Heart left ventricle (tissue), 16 donors: ENCODE measurements at regions of chr3 and their contacts with region 1.

Region 1: GRCh38 chr3:24483873-24484272 is 10.8 kb downstream of the THRB start:
- DNase-seq: no peak
- ATAC-seq: peak in 2 of 4 donors; percentile 25 to 49
- H3K4me3 ChIP-seq: no peak overlapping the region
- H3K27ac ChIP-seq: no peak overlapping the region
- H3K4me1 ChIP-seq: peaks cover 0 to 56% (median 9%) of the 10 kb centered on the region in 12 donors
- H3K27me3 ChIP-seq: no peaks in the 10 kb centered on the region
- CTCF ChIP-seq: no peak
- POLR2A ChIP-seq: no peak

Region 2: GRCh38 chr3:24365194-24365612 is 118.7 kb before region 1 on chr3:
- intact Hi-C with region 1: loop called in 2 of 10 experiments (anchors 10 kb)
- DNase-seq: peak in 4 of 5 donors; percentile 35 to 57 (median 46)
- ATAC-seq: peak; percentile 76 to 94 (median 93)
- H3K4me3 ChIP-seq: no peak overlapping the region
- H3K27ac ChIP-seq: peak overlapping the region in 9 of 12 donors; percentile 4 to 57 (median 28)
- H3K4me1 ChIP-seq: peaks cover 0 to 38% (median 24%) of the 10 kb centered on the region in 12 donors
- H3K27me3 ChIP-seq: no peaks in the 10 kb centered on the region
- CTCF ChIP-seq: peak in 4 of 12 donors; percentile 25 to 46 (median 40)
- POLR2A ChIP-seq: no peak

Region 3: GRCh38 chr3:24377218-24377993 is 106.5 kb before region 1 on chr3:
- intact Hi-C with region 1: loop called in 1 of 10 experiments (anchors 10 kb)
- DNase-seq: no peak
- ATAC-seq: peak in 1 of 4 donors; percentile 30
- H3K4me3 ChIP-seq: no peak overlapping the region
- H3K27ac ChIP-seq: peak overlapping the region in 1 of 12 donors; percentile 52
- H3K4me1 ChIP-seq: peaks cover 0 to 47% (median 17%) of the 10 kb centered on the region in 12 donors
- H3K27me3 ChIP-seq: no peaks in the 10 kb centered on the region
- CTCF ChIP-seq: no peak
- POLR2A ChIP-seq: no peak